MCF 10A (cell line): ENCODE measurements at regions of chr20 and their contacts with region 1.

Region 1: GRCh38 chr20:362271-363254 is 15.7 kb downstream of the NRSN2 start:
- DNase-seq: peak; percentile 99
- H3K4me3 Mint-ChIP-seq: peak overlapping the region; percentile 64
- H3K27ac Mint-ChIP-seq: peak overlapping the region; percentile 67
- H3K4me1 Mint-ChIP-seq: peaks cover 60% of the 10 kb centered on the region
- H3K27me3 Mint-ChIP-seq: no peaks in the 10 kb centered on the region
- CTCF ChIP-seq: peak; percentile 73

Region 2: GRCh38 chr20:152131-152530 is 210.4 kb before region 1 on chr20:
- CTCF ChIA-PET with region 1: no interaction called
- POLR2A ChIA-PET with region 1: no interaction called
- intact Hi-C with region 1: no loop called
- DNase-seq: no peak
- H3K4me3 Mint-ChIP-seq: no peak overlapping the region
- H3K27ac Mint-ChIP-seq: no peak overlapping the region
- H3K4me1 Mint-ChIP-seq: no peaks in the 10 kb centered on the region
- H3K27me3 Mint-ChIP-seq: peaks cover 87% of the 10 kb centered on the region
- CTCF ChIP-seq: no peak

Region 3: DNA sequence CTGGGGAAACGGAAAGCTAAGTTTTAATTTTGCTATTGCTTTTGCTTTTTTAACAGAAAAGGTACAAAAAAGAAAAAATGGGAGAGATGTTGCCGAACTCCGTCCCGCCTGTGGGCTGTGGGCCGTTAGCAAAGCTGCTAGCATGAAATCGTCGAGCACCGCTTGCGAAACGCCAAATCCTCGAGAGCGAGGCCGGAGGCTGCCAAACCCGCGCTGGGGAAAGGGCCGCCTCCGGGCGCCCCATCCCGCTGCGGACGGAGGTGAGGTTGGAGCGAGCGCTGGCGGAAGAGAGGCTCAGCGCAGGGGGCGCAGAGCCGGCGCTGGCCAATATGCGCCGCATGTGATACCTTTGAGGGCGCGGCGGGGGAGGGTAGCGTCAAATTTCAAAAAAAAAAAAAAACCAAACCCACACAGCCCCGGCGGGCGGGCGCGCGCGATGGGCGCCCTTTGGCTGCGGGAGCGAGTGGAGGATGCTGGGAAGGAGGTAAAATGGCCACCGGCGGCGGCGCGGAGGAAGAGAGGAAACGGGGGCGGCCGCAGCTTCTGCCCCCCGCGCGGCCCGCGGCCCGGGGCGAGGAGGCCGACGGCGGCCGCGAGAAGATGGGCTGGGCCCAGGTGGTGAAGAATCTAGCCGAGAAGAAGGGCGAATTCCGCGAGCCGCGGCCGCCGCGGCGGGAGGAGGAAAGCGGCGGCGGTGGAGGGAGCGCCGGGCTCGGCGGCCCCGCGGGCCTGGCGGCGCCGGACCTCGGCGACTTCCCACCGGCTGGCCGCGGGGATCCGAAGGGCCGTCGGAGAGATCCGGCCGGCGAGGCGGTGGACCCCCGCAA is 65.3 kb before region 1 on chr20 and contains the start of gene ZCCHC3:
- CTCF ChIA-PET with region 1: interaction called, 6 read pairs
- POLR2A ChIA-PET with region 1: interaction called, 14 read pairs
- intact Hi-C with region 1: no loop called
- DNase-seq: peak; percentile 96
- H3K4me3 Mint-ChIP-seq: peak within 1 kb of the TSS; percentile 93
- H3K27ac Mint-ChIP-seq: peak within 1 kb of the TSS; percentile 99
- H3K4me1 Mint-ChIP-seq: peaks cover 31% of the 10 kb centered on the region
- H3K27me3 Mint-ChIP-seq: no peaks in the 10 kb centered on the region
- CTCF ChIP-seq: no peak
- total RNA-seq, gene ZCCHC3: 11.7 and 12.1 TPM in 2 replicates

Region 4: DNA sequence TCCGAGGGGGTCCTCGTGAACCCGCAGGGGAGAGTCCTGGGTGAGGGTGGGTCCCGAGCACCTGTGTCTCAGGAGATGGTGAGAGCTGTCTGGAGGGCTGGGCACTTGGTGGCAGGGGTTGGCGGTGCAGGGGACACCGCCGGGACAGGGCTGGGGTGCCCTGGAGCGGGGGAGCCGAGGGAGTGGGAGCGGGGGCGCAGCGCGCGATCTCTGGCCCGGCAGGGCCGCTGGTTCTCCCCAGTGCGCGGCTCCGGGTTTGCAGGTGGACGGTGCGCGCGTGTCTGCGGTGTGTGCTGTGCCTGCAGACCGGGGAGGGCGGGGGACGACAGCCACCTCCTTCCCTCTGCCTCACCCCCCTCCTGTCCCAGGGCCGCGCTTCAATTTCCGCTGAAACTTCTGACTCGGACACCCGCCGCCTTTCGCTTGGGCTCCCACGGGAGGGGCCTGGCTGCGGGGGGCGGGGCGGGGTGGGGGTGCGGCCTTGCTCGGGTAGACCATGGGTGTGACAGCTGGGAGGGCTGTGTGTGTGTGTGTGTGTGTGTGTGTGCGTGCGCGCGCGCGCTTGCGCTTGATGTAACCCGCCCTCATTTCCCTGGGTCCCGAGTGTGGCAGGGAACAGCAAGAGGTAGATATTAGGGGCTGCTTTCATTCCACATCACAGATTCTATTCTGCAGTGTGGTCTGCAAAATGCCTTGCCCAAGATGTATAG is 19.2 kb after region 1 on chr20:
- CTCF ChIA-PET with region 1: interaction called, 80 read pairs
- POLR2A ChIA-PET with region 1: interaction called, 671 read pairs
- intact Hi-C with region 1: loop called (anchors 1 kb)
- DNase-seq: peak; percentile 81
- H3K4me3 Mint-ChIP-seq: peak overlapping the region; percentile 79
- H3K27ac Mint-ChIP-seq: no peak overlapping the region
- H3K4me1 Mint-ChIP-seq: peaks cover 25% of the 10 kb centered on the region
- H3K27me3 Mint-ChIP-seq: no peaks in the 10 kb centered on the region
- CTCF ChIP-seq: no peak

Region 5: DNA sequence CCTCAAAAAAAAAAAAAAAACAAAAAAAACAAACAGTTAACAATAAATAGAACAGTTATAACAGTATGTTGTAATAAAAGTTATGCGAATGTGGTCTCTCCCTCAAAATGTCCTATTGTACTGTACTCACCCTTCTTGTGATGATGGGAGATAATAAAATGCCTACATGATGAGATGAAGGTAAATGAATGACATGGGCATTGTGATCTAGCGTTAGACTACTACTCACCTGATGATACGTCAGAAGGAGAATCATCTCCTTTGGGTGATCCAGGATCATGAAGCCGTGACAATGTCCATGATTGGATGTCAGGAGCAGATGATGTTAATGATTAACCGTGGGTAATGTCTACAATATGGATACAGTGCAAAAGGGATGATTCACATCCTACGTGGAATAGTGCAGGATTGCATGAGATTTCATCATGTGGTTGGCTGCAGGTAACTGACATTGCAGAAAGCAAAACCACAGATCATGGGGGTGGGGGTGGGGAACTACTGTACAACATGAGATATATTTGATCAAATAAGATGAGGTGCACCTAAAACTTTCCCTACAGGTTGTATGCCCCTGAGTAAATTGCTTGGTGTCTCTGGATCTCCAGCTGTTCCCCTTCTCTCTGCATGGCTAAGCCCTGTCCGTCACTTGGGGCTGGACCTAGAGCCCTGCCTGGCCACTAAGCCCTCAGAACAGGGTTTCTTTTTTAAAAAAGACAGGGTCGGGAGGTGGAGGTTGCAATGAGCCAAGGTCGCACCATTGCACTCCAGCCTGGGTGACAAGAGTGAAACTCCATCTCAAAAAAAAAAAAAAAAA is 39.3 kb after region 1 on chr20:
- CTCF ChIA-PET with region 1: interaction called, 45 read pairs
- POLR2A ChIA-PET with region 1: interaction called, 197 read pairs
- intact Hi-C with region 1: loop called (anchors 2 kb)
- DNase-seq: peak; percentile 94
- H3K4me3 Mint-ChIP-seq: peak overlapping the region; percentile 41
- H3K27ac Mint-ChIP-seq: peak overlapping the region; percentile 78
- H3K4me1 Mint-ChIP-seq: peaks cover 19% of the 10 kb centered on the region
- H3K27me3 Mint-ChIP-seq: no peaks in the 10 kb centered on the region
- CTCF ChIP-seq: no peak

Region 6: DNA sequence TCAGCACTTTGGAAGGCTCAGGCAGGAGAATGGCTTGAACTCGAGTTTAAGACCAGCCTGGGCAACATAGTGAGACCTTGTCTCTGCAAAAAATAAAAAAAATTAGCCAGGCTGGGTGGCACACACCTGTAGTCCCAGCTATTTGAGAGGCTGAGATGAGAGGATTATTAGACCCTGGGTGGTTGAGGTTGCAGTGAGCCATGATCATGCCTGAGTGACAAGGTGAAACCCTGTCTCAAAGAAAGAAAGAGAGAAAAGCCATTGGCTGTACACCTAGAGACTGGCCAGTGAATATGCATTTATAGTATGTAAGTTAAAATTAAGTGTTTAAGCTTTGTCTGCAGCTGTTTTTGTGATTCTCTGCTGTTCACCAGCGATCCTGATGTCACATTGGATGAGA is 51.6 kb after region 1 on chr20:
- CTCF ChIA-PET with region 1: interaction called, 12 read pairs
- POLR2A ChIA-PET with region 1: interaction called, 29 read pairs
- intact Hi-C with region 1: no loop called
- DNase-seq: no peak
- H3K4me3 Mint-ChIP-seq: no peak overlapping the region
- H3K27ac Mint-ChIP-seq: peak overlapping the region; percentile 66
- H3K4me1 Mint-ChIP-seq: peaks cover 45% of the 10 kb centered on the region
- H3K27me3 Mint-ChIP-seq: no peaks in the 10 kb centered on the region
- CTCF ChIP-seq: no peak

Region 7: DNA sequence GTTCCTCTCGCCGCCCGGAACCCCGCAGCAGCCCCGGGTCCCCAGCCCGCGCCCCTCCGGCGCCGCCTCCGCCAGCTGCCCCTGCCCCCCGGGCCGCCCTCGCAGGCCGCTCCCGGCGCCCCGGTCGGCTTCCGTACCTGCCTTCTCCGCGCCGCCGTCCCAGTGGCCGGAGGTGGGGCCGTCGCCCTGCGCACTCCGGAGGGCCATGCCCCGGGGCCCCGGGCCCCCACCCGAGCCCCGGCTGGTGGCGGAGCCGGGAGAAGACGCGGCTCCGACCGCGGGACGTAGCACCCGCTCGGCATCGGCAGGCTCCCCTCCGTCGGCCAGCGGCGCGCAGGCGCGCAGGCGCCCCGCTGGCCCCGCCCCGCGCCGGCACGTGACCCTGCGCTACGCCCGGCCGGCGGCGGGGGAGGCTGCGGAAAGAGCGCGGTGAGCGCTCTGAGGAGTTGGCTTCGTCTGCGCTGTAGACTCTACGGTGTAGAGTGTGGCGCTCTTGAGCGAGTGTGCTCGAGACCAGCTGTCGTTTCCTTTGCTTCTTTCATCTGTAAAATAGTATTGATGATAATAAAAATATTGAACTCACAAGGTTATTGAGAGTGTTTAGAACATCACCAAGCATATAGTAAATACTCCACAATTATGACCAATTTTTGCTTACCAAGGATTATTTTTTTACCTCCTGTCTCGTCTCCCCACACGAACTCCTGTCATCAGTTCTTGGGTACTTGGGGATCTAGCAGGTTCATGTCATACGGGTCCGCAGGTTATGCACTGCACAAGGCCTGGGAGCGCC is 99.8 kb after region 1 on chr20 and contains the start of gene TBC1D20:
- CTCF ChIA-PET with region 1: interaction called, 10 read pairs
- POLR2A ChIA-PET with region 1: interaction called, 42 read pairs
- intact Hi-C with region 1: no loop called
- DNase-seq: peak; percentile 83
- H3K4me3 Mint-ChIP-seq: peak within 1 kb of the TSS; percentile 93
- H3K27ac Mint-ChIP-seq: peak within 1 kb of the TSS; percentile 75
- H3K4me1 Mint-ChIP-seq: peaks cover 23% of the 10 kb centered on the region
- H3K27me3 Mint-ChIP-seq: no peaks in the 10 kb centered on the region
- CTCF ChIP-seq: no peak
- total RNA-seq, gene TBC1D20: 32.5 and 36.0 TPM in 2 replicates

Region 8: GRCh38 chr20:478949-479429 is 116.4 kb after region 1 on chr20:
- CTCF ChIA-PET with region 1: interaction called, 45 read pairs
- POLR2A ChIA-PET with region 1: interaction called, 10 read pairs
- intact Hi-C with region 1: no loop called
- DNase-seq: peak; percentile 71
- H3K4me3 Mint-ChIP-seq: no peak overlapping the region
- H3K27ac Mint-ChIP-seq: no peak overlapping the region
- H3K4me1 Mint-ChIP-seq: peaks cover 11% of the 10 kb centered on the region
- H3K27me3 Mint-ChIP-seq: no peaks in the 10 kb centered on the region
- CTCF ChIP-seq: peak; percentile 51